ENCODE measurements at regions of chr3 and their contacts with region 1.

Region 1: GRCh38 chr3:25782938-25783660 is at the start of gene NGLY1:
- DNase-seq: peak; percentile 84 to 87 (median 86)
- H3K4me3 ChIP-seq: peak within 1 kb of the TSS; percentile 32 to 69
- H3K4me3 Mint-ChIP-seq: peak within 1 kb of the TSS; percentile 88 to 97 (median 92)
- H3K27ac ChIP-seq: peak within 1 kb of the TSS; percentile 83
- H3K27ac Mint-ChIP-seq: peak within 1 kb of the TSS; percentile 89 to 95 (median 94)
- H3K4me1 ChIP-seq: peaks cover 41% of the 10 kb centered on the region
- H3K4me1 Mint-ChIP-seq: peaks cover 22 to 53% (median 36%) of the 10 kb centered on the region in 4 donors
- H3K27me3 ChIP-seq: no peaks in the 10 kb centered on the region
- H3K27me3 Mint-ChIP-seq: no peaks in the 10 kb centered on the region
- total RNA-seq, gene NGLY1: 71.3 to 74.3 TPM

Region 2: DNA sequence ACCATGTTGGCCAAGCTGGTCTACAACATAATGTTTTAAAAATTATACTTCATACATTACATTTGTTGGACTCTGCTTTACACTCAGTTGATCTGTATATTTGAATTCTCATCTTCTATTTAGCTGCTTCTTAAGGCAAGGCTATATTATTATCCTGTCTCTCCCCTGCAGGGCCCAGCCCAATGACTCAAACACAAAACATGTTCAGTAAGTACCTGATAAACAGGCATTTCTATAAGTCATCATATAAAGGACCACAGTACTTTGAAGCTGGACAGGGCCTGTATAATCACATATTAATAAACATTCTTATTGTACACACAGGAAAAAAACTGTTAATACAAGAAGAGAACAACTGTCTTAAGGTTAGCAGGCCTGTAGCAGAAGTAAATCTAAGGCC is 36.1 kb before region 1 on chr3:
- CTCF ChIA-PET with region 1: interaction called, 3 read pairs
- POLR2A ChIA-PET with region 1: no interaction called
- intact Hi-C with region 1: loop called (anchors 5 kb)
- DNase-seq: no peak
- H3K4me3 ChIP-seq: no peak overlapping the region
- H3K4me3 Mint-ChIP-seq: no peak overlapping the region
- H3K27ac ChIP-seq: no peak overlapping the region
- H3K27ac Mint-ChIP-seq: peak overlapping the region in 1 of 7 donors; percentile 14
- H3K4me1 ChIP-seq: no peaks in the 10 kb centered on the region
- H3K4me1 Mint-ChIP-seq: peaks cover 7 to 13% (median 12%) of the 10 kb centered on the region in 4 donors
- H3K27me3 ChIP-seq: no peaks in the 10 kb centered on the region
- H3K27me3 Mint-ChIP-seq: no peaks in the 10 kb centered on the region

Region 3: DNA sequence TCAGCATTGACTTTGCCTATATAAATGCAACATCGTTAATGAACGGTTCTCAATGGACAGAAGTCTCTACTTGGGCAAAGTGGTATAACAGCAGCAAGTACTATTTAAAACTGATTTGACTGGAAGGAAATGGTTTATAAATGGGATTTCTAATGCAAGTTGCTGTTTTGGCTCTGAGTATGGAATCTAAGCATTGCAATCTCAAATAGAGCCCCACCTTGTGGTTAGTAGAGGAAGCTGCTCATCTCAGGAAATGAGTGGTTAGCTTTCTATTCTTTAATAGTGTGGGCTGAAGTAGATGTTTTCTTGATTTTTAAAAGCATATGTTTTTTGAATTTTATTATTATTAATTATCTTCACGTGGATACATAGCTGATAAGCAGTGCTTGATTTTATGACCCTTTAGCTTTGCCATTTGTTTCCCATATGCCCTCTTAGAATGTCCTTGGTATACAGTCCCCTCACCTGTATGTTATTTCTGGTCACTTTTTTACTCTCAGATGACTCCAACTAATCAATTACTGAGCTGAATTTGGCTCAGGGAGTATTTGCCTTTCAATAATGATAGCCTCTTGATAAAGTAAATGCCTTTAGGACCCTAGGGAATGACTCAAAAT is 73.9 kb after region 1 on chr3:
- CTCF ChIA-PET with region 1: interaction called, 5 read pairs
- POLR2A ChIA-PET with region 1: no interaction called
- intact Hi-C with region 1: loop called (anchors 2 kb)
- DNase-seq: peak in 4 of 5 donors; percentile 39 to 50 (median 46)
- H3K4me3 ChIP-seq: no peak overlapping the region
- H3K4me3 Mint-ChIP-seq: no peak overlapping the region
- H3K27ac ChIP-seq: no peak overlapping the region
- H3K27ac Mint-ChIP-seq: no peak overlapping the region
- H3K4me1 ChIP-seq: no peaks in the 10 kb centered on the region
- H3K4me1 Mint-ChIP-seq: peaks cover 0 to 4% (median under 1%) of the 10 kb centered on the region in 4 donors
- H3K27me3 ChIP-seq: no peaks in the 10 kb centered on the region
- H3K27me3 Mint-ChIP-seq: no peaks in the 10 kb centered on the region

Region 4: GRCh38 chr3:26590919-26591484 is 807.9 kb after region 1 on chr3:
- CTCF ChIA-PET with region 1: no interaction called
- POLR2A ChIA-PET with region 1: no interaction called
- intact Hi-C with region 1: no loop called
- DNase-seq: no peak
- H3K4me3 ChIP-seq: no peak overlapping the region
- H3K4me3 Mint-ChIP-seq: no peak overlapping the region
- H3K27ac ChIP-seq: no peak overlapping the region
- H3K27ac Mint-ChIP-seq: no peak overlapping the region
- H3K4me1 ChIP-seq: no peaks in the 10 kb centered on the region
- H3K4me1 Mint-ChIP-seq: no peaks in the 10 kb centered on the region
- H3K27me3 ChIP-seq: no peaks in the 10 kb centered on the region
- H3K27me3 Mint-ChIP-seq: no peaks in the 10 kb centered on the region